Caco-2 (cell line): ENCODE measurements at regions of chr12 and their contacts with region 1.

Region 1: DNA sequence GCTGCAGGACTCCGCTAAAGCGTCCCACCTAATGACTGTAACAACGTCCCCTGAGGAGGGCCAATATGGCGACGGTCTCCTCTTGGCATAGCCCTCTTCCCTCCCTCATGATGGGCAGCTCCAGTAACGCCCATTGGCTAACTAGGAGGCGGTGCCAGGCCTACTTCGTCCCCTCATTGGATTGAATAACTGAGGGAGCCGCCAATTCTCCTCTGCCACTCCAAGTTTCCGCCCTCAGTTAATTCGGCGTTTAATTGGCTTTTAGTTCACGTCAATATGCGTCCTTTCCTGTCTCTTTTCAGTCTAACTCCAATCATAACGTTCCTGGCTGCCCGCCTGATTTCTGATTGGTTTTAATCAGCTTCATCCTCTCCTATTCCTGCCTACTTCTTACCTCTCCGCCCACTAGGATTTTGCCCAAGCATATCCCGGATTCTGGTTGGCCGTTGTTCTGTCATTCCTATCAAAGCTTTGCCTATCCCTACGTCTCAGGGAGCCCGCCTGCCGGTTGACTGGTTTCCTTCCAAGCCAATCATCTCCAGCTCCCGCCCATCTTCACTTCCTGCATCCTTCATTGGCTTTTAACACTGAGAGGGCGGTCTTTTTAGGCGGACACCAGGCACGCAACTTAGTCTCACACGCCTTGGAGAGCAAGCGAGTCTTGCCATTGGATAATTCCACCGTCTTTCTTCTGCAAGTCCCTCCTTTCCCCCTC is 430 bp upstream of the SP1 start:
- DNase-seq: peak; percentile 98 to 99
- H3K4me3 ChIP-seq: peak overlapping the region; percentile 45
- H3K4me3 Mint-ChIP-seq: no peak overlapping the region
- H3K27ac Mint-ChIP-seq: no peak overlapping the region
- H3K4me1 ChIP-seq: peaks cover 22% of the 10 kb centered on the region
- H3K4me1 Mint-ChIP-seq: peaks cover 9% of the 10 kb centered on the region
- H3K27me3 ChIP-seq: no peaks in the 10 kb centered on the region
- H3K27me3 Mint-ChIP-seq: no peaks in the 10 kb centered on the region
- CTCF ChIP-seq: no peak

Region 2: GRCh38 chr12:52913076-52913821 is 466.3 kb before region 1 on chr12:
- CTCF ChIA-PET with region 1: interaction called, 13 read pairs
- POLR2A ChIA-PET with region 1: no interaction called
- intact Hi-C with region 1: no loop called
- DNase-seq: peak; percentile 70 to 82
- H3K4me3 ChIP-seq: no peak overlapping the region
- H3K4me3 Mint-ChIP-seq: peak overlapping the region; percentile 4
- H3K27ac Mint-ChIP-seq: peak overlapping the region; percentile 55
- H3K4me1 ChIP-seq: peaks cover 71% of the 10 kb centered on the region
- H3K4me1 Mint-ChIP-seq: peaks cover 62% of the 10 kb centered on the region
- H3K27me3 ChIP-seq: no peaks in the 10 kb centered on the region
- H3K27me3 Mint-ChIP-seq: no peaks in the 10 kb centered on the region
- CTCF ChIP-seq: no peak

Region 3: GRCh38 chr12:53220801-53221202 is 158.7 kb before region 1 on chr12:
- CTCF ChIA-PET with region 1: interaction called, 3 read pairs
- POLR2A ChIA-PET with region 1: no interaction called
- intact Hi-C with region 1: loop called (anchors 5 kb)
- DNase-seq: peak; percentile 95
- H3K4me3 ChIP-seq: peak overlapping the region; percentile 45
- H3K4me3 Mint-ChIP-seq: peak overlapping the region; percentile 97
- H3K27ac Mint-ChIP-seq: peak overlapping the region; percentile 89
- H3K4me1 ChIP-seq: peaks cover 25% of the 10 kb centered on the region
- H3K4me1 Mint-ChIP-seq: peaks cover 53% of the 10 kb centered on the region
- H3K27me3 ChIP-seq: no peaks in the 10 kb centered on the region
- H3K27me3 Mint-ChIP-seq: no peaks in the 10 kb centered on the region
- CTCF ChIP-seq: no peak

Region 4: GRCh38 chr12:53352331-53353256 is 27.0 kb before region 1 on chr12:
- CTCF ChIA-PET with region 1: interaction called, 17 read pairs
- POLR2A ChIA-PET with region 1: interaction called, 7 read pairs
- intact Hi-C with region 1: loop called (anchors 1 kb)
- DNase-seq: peak; percentile 87 to 88
- H3K4me3 ChIP-seq: no peak overlapping the region
- H3K4me3 Mint-ChIP-seq: no peak overlapping the region
- H3K27ac Mint-ChIP-seq: peak overlapping the region; percentile 52
- H3K4me1 ChIP-seq: peaks cover 5% of the 10 kb centered on the region
- H3K4me1 Mint-ChIP-seq: peaks cover 10% of the 10 kb centered on the region
- H3K27me3 ChIP-seq: no peaks in the 10 kb centered on the region
- H3K27me3 Mint-ChIP-seq: no peaks in the 10 kb centered on the region
- CTCF ChIP-seq: peak; percentile 77 to 78

Region 5: GRCh38 chr12:53424626-53425514 is 45.3 kb after region 1 on chr12:
- CTCF ChIA-PET with region 1: interaction called, 21 read pairs
- POLR2A ChIA-PET with region 1: interaction called, 10 read pairs
- intact Hi-C with region 1: no loop called
- DNase-seq: no peak
- H3K4me3 ChIP-seq: no peak overlapping the region
- H3K4me3 Mint-ChIP-seq: no peak overlapping the region
- H3K27ac Mint-ChIP-seq: no peak overlapping the region
- H3K4me1 ChIP-seq: peaks cover 15% of the 10 kb centered on the region
- H3K4me1 Mint-ChIP-seq: peaks cover 24% of the 10 kb centered on the region
- H3K27me3 ChIP-seq: no peaks in the 10 kb centered on the region
- H3K27me3 Mint-ChIP-seq: no peaks in the 10 kb centered on the region
- CTCF ChIP-seq: no peak

Region 6: DNA sequence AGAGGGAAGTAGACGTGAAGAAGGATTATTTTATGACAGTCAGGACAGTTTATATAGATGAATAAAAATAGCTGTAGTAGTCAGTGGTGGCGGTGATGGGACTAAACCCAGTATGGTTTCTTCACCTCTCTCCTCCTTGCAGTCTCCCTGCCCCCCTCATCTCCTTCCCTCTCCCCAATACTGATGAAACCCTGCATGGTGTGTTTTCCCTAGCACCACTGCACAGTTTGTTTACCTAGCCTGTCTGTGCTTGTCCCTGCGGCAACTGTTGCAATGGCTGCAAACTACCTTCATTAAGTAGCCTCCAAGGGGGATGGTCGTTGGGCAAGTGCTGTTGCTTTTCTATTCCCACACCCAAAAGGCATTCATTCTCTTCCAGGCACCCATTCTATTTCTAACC is 87.1 kb after region 1 on chr12:
- CTCF ChIA-PET with region 1: no interaction called
- POLR2A ChIA-PET with region 1: no interaction called
- intact Hi-C with region 1: no loop called
- DNase-seq: peak in 1 of 2 experiments; percentile 19
- H3K4me3 ChIP-seq: no peak overlapping the region
- H3K4me3 Mint-ChIP-seq: no peak overlapping the region
- H3K27ac Mint-ChIP-seq: no peak overlapping the region
- H3K4me1 ChIP-seq: no peaks in the 10 kb centered on the region
- H3K4me1 Mint-ChIP-seq: peaks cover 13% of the 10 kb centered on the region
- H3K27me3 ChIP-seq: no peaks in the 10 kb centered on the region
- H3K27me3 Mint-ChIP-seq: no peaks in the 10 kb centered on the region
- CTCF ChIP-seq: no peak

Region 7: DNA sequence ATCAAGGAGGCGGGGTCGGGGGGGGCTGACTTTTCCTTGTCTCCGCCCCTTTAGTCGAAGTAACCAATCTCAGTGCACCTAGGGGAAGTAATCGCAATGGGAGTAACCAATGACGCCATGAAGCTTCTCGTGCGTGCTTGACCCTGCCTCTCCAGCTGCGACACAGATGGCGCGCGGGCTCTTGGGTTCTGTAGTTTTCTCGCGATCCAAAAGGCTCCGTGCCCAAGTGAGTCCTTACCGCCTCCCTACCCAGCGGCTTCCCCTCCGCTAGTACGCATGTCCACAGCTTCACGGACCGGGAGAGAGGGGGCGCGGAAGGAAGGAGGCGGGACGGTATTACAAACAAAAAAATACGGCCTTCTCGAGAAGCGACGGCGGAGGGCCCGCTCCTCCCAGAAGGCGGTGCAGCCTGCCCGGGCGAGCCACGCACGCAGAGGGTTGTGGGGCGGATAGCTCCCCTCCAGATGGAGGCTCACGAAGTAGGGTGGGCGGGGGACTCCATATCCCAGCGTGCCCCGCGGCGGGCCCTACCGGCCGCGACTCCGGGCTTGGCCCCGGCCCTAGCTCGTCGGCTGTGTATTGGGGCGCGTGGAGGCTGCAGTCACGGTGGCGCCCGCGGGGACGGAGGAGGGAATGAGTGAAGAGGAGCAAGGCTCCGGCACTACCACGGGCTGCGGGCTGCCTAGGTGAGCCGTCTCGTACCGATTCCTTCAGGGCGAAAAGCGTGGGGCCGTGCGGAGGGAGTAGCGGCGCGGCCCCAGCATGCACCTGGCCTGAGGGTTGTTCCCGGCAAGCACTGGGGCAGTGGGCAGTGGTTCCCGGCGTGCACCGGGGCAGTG is 121.4 kb after region 1 on chr12 and contains the start of gene TARBP2:
- CTCF ChIA-PET with region 1: no interaction called
- POLR2A ChIA-PET with region 1: interaction called, 12 read pairs
- intact Hi-C with region 1: no loop called
- DNase-seq: peak; percentile 97 to 98
- H3K4me3 ChIP-seq: peak within 1 kb of the TSS; percentile 63
- H3K4me3 Mint-ChIP-seq: peak within 1 kb of the TSS; percentile 80
- H3K27ac Mint-ChIP-seq: peak within 1 kb of the TSS; percentile 86
- H3K4me1 ChIP-seq: peaks cover 16% of the 10 kb centered on the region
- H3K4me1 Mint-ChIP-seq: peaks cover 31% of the 10 kb centered on the region
- H3K27me3 ChIP-seq: no peaks in the 10 kb centered on the region
- H3K27me3 Mint-ChIP-seq: no peaks in the 10 kb centered on the region
- CTCF ChIP-seq: no peak
- total RNA-seq, gene TARBP2: 43.9 and 50.7 TPM in 2 replicates

Region 8: GRCh38 chr12:53917126-53917653 is 537.6 kb after region 1 on chr12:
- CTCF ChIA-PET with region 1: no interaction called
- POLR2A ChIA-PET with region 1: no interaction called
- intact Hi-C with region 1: no loop called
- DNase-seq: no peak
- H3K4me3 ChIP-seq: no peak overlapping the region
- H3K4me3 Mint-ChIP-seq: no peak overlapping the region
- H3K27ac Mint-ChIP-seq: no peak overlapping the region
- H3K4me1 ChIP-seq: no peaks in the 10 kb centered on the region
- H3K4me1 Mint-ChIP-seq: no peaks in the 10 kb centered on the region
- H3K27me3 ChIP-seq: no peaks in the 10 kb centered on the region; the same call in 1 of the 2 replicates
- H3K27me3 Mint-ChIP-seq: no peaks in the 10 kb centered on the region
- CTCF ChIP-seq: no peak